ENCODE measurements at regions of chr7 and their contacts with region 1.

Region 1: GRCh38 chr7:43693687-43694398 is 35.5 kb downstream of the COA1 start:
- DNase-seq: no peak
- ATAC-seq: no peak
- H3K4me3 ChIP-seq: no peak overlapping the region
- H3K4me3 Mint-ChIP-seq: no peak overlapping the region
- H3K27ac ChIP-seq: no peak overlapping the region
- H3K27ac Mint-ChIP-seq: no peak overlapping the region
- H3K4me1 ChIP-seq: peaks cover 17% of the 10 kb centered on the region
- H3K4me1 Mint-ChIP-seq: peaks cover 47% of the 10 kb centered on the region
- H3K27me3 ChIP-seq: no peaks in the 10 kb centered on the region
- H3K27me3 Mint-ChIP-seq: no peaks in the 10 kb centered on the region
- CTCF ChIP-seq: no peak

Region 2: GRCh38 chr7:43674584-43675436 is 19.0 kb before region 1 on chr7:
- CTCF ChIA-PET with region 1: interaction called, 15 read pairs
- POLR2A ChIA-PET with region 1: interaction called, 8 read pairs
- intact Hi-C with region 1: loop called in 1 of 2 experiments (anchors 1 kb)
- DNase-seq: no peak
- ATAC-seq: no peak
- H3K4me3 ChIP-seq: no peak overlapping the region
- H3K4me3 Mint-ChIP-seq: no peak overlapping the region
- H3K27ac ChIP-seq: no peak overlapping the region
- H3K27ac Mint-ChIP-seq: peak overlapping the region; percentile 56
- H3K4me1 ChIP-seq: peaks cover 18% of the 10 kb centered on the region
- H3K4me1 Mint-ChIP-seq: peaks cover 87% of the 10 kb centered on the region
- H3K27me3 ChIP-seq: no peaks in the 10 kb centered on the region
- H3K27me3 Mint-ChIP-seq: no peaks in the 10 kb centered on the region
- CTCF ChIP-seq: no peak

Region 3: GRCh38 chr7:44936322-44936721 is 1242.5 kb after region 1 on chr7:
- CTCF ChIA-PET with region 1: no interaction called
- POLR2A ChIA-PET with region 1: no interaction called
- intact Hi-C with region 1: no loop called
- DNase-seq: no peak
- ATAC-seq: no peak
- H3K4me3 ChIP-seq: no peak overlapping the region
- H3K4me3 Mint-ChIP-seq: no peak overlapping the region
- H3K27ac ChIP-seq: no peak overlapping the region
- H3K27ac Mint-ChIP-seq: no peak overlapping the region
- H3K4me1 ChIP-seq: no peaks in the 10 kb centered on the region
- H3K4me1 Mint-ChIP-seq: no peaks in the 10 kb centered on the region
- H3K27me3 ChIP-seq: no peaks in the 10 kb centered on the region
- H3K27me3 Mint-ChIP-seq: peaks cover 9% of the 10 kb centered on the region
- CTCF ChIP-seq: no peak